ENCODE measurements at regions of chr6 and their contacts with region 1.

Region 1: GRCh38 chr6:89819336-89820130 is at the start of gene MDN1:
- DNase-seq: peak; percentile 96
- H3K4me3 ChIP-seq: peak within 1 kb of the TSS; percentile 35 to 78 (median 67)
- H3K27ac ChIP-seq: peak within 1 kb of the TSS; percentile 11
- H3K4me1 ChIP-seq: peaks cover 13% of the 10 kb centered on the region
- H3K27me3 ChIP-seq: no peaks in the 10 kb centered on the region
- CTCF ChIP-seq: no peak
- POLR2A ChIP-seq: peak; percentile 84
- total RNA-seq, gene MDN1: 35.1 and 39.6 TPM in 2 replicates

Region 2: GRCh38 chr6:89432875-89433251 is 386.7 kb before region 1 on chr6 and contains the start of gene ANKRD6:
- CTCF ChIA-PET with region 1: no interaction called
- POLR2A ChIA-PET with region 1: no interaction called
- dilution Hi-C with region 1: no loop called
- intact Hi-C with region 1: loop called (anchors 10 kb)
- DNase-seq: peak; percentile 37
- H3K4me3 ChIP-seq: peak within 1 kb of the TSS; percentile 26 to 64 (median 52)
- H3K27ac ChIP-seq: no peak within 1 kb of the TSS
- H3K4me1 ChIP-seq: peaks cover 18% of the 10 kb centered on the region
- H3K27me3 ChIP-seq: peaks cover 2 to 7% of the 10 kb centered on the region in 2 experiments
- CTCF ChIP-seq: peak; percentile 80 to 82
- POLR2A ChIP-seq: no peak
- total RNA-seq, gene ANKRD6: 7.7 and 9.6 TPM in 2 replicates

Region 3: GRCh38 chr6:89829591-89830385 is 10.3 kb after region 1 on chr6 and contains the start of gene CASP8AP2:
- CTCF ChIA-PET with region 1: interaction called, 16 read pairs
- POLR2A ChIA-PET with region 1: interaction called, 12 read pairs
- dilution Hi-C with region 1: no loop called
- intact Hi-C with region 1: loop called (anchors 1 kb)
- DNase-seq: peak; percentile 100
- H3K4me3 ChIP-seq: peak within 1 kb of the TSS; percentile 94 to 97 (median 95)
- H3K27ac ChIP-seq: peak within 1 kb of the TSS; percentile 42
- H3K4me1 ChIP-seq: peaks cover 10% of the 10 kb centered on the region
- H3K27me3 ChIP-seq: no peaks in the 10 kb centered on the region
- CTCF ChIP-seq: no peak
- POLR2A ChIP-seq: peak; percentile 50
- total RNA-seq, gene CASP8AP2: 20.2 and 22.0 TPM in 2 replicates

Region 4: GRCh38 chr6:89873721-89874120 is 54.2 kb after region 1 on chr6:
- CTCF ChIA-PET with region 1: no interaction called
- POLR2A ChIA-PET with region 1: no interaction called
- dilution Hi-C with region 1: no loop called
- intact Hi-C with region 1: loop called (anchors 2 kb)
- DNase-seq: no peak
- H3K4me3 ChIP-seq: no peak overlapping the region
- H3K27ac ChIP-seq: no peak overlapping the region
- H3K4me1 ChIP-seq: no peaks in the 10 kb centered on the region
- H3K27me3 ChIP-seq: no peaks in the 10 kb centered on the region
- CTCF ChIP-seq: no peak
- POLR2A ChIP-seq: no peak

Region 5: DNA sequence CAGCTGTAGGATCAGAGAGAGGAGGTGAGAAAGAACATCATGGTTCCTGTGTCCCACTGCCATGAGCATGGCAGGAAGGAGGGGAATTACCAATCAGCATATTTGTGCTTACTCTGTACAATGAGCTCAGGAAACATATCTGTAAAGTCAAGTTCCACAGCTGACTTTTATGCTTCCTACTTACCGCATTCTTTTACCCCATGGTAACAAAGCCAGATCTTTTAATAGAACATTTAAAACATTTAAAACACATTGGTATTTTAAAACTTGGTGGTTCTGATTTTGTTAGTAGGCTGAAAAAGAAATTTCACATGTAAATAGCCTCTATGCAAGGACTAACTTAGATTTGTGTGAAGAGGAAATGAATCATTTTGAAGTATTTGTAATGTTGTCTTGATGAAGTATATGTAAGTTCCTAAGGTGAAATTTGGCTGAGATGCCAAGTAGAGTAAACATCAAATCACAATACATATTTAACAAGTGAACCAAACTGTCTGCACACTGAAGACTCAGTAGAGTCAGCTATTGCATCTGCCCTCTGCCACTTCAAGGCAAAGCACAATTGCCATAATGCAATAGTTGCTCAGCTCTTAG is 189.5 kb after region 1 on chr6:
- CTCF ChIA-PET with region 1: no interaction called
- POLR2A ChIA-PET with region 1: no interaction called
- dilution Hi-C with region 1: no loop called
- intact Hi-C with region 1: no loop called
- DNase-seq: peak; percentile 86
- H3K4me3 ChIP-seq: peak overlapping the region in 1 of 3 experiments; percentile 9
- H3K27ac ChIP-seq: peak overlapping the region; percentile 85
- H3K4me1 ChIP-seq: peaks cover 16% of the 10 kb centered on the region
- H3K27me3 ChIP-seq: no peaks in the 10 kb centered on the region
- CTCF ChIP-seq: no peak
- POLR2A ChIP-seq: no peak

Region 6: GRCh38 chr6:90478789-90479602 is 659.5 kb after region 1 on chr6:
- CTCF ChIA-PET with region 1: no interaction called
- POLR2A ChIA-PET with region 1: no interaction called
- dilution Hi-C with region 1: no loop called
- intact Hi-C with region 1: loop called (anchors 10 kb)
- DNase-seq: peak; percentile 89
- H3K4me3 ChIP-seq: no peak overlapping the region
- H3K27ac ChIP-seq: no peak overlapping the region
- H3K4me1 ChIP-seq: peaks cover 9% of the 10 kb centered on the region
- H3K27me3 ChIP-seq: peaks cover 0 to 3% of the 10 kb centered on the region in 2 experiments
- CTCF ChIP-seq: peak; percentile 75 to 81
- POLR2A ChIP-seq: no peak

Region 7: DNA sequence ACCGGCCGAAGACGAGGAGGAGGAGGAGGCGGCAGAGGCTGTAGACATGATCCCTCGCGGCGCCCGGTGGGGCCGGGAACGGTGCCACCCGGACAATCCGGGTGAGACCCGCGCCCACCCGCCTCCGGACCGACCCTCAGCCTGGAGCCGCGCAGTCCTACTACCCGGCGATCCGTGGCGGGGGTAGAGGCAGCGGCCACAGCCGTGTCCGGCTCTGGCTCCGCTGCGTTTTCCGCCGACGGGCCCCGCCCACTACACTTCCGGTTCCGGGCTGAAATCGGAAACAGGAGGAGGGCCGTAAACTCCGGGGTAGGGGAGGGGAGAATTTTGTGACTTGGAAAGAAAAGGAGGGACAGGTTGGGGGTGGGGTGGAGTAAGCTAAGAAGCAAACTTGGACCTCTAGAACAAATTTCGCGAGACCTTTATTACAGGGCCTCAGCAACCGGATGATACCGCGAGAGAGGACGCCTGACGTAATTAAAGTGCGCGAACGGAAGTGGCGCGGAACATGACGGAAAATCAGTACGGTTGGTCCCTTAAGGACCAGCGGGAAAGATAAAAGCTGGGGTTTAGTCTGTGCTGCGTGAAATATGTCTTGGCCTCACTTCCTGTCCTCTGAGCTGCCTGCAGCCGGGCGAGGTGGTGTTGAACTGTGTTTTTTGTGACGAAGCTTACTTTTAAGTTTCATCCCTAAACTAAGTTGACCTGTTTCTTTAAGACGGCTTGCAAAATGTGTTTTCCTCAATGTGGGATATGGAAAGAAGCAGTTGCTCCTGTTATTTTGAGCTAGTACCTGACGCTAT is 767.5 kb after region 1 on chr6 and contains the start of gene MAP3K7:
- CTCF ChIA-PET with region 1: no interaction called
- POLR2A ChIA-PET with region 1: no interaction called
- dilution Hi-C with region 1: no loop called
- intact Hi-C with region 1: loop called (anchors 1 kb)
- DNase-seq: peak; percentile 98
- H3K4me3 ChIP-seq: peak within 1 kb of the TSS; percentile 84 to 100 (median 95)
- H3K27ac ChIP-seq: peak within 1 kb of the TSS; percentile 88
- H3K4me1 ChIP-seq: peaks cover 22% of the 10 kb centered on the region
- H3K27me3 ChIP-seq: peaks cover 2 to 4% of the 10 kb centered on the region in 2 experiments
- CTCF ChIP-seq: no peak
- POLR2A ChIP-seq: peak; percentile 86
- total RNA-seq, gene MAP3K7: 24.5 and 25.6 TPM in 2 replicates